ENCODE measurements at regions of chr6 and their contacts with region 1.

Region 1: DNA sequence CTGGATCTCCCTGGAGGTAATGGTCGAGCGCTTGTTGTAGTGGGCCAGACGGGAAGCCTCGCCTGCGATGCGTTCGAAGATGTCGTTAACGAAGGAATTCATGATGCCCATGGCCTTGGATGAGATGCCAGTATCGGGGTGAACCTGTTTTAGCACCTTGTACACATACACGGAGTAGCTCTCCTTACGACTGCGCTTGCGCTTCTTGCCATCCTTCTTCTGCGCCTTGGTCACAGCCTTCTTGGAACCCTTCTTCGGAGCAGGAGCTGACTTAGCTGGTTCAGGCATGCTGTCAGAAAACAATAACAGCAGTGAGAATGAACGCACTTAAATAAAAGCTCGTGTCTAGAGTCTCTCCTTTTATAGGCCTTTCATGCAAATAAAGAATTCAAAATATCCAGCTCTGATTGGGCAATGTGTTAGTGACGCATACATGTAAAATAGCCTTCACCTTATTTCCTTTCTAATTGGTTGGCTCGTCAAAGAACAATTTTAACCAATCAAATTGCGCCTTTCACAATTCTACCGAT is 129.2 kb downstream of the HFE start:
- DNase-seq: peak in 5 of 10 donors; percentile 66 to 77 (median 69)
- H3K4me3 ChIP-seq: peak overlapping the region; percentile 36 to 81 (median 66)
- H3K27ac ChIP-seq: peak overlapping the region in 57 of 59 donors; percentile 64 to 98 (median 91)
- H3K27me3 ChIP-seq: peaks cover 0 to 67% (median 16%) of the 10 kb centered on the region in 45 donors
- CTCF ChIP-seq: no peak

Region 2: DNA sequence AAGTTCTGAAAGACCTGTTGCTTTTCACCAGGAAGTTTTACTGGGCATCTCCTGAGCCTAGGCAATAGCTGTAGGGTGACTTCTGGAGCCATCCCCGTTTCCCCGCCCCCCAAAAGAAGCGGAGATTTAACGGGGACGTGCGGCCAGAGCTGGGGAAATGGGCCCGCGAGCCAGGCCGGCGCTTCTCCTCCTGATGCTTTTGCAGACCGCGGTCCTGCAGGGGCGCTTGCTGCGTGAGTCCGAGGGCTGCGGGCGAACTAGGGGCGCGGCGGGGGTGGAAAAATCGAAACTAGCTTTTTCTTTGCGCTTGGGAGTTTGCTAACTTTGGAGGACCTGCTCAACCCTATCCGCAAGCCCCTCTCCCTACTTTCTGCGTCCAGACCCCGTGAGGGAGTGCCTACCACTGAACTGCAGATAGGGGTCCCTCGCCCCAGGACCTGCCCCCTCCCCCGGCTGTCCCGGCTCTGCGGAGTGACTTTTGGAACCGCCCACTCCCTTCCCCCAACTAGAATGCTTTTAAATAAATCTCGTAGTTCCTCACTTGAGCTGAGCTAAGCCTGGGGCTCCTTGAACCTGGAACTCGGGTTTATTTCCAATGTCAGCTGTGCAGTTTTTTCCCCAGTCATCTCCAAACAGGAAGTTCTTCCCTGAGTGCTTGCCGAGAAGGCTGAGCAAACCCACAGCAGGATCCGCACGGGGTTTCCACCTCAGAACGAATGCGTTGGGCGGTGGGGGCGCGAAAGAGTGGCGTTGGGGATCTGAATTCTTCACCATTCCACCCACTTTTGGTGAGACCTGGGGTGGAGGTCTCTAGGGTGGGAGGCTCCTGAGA is 128.9 kb before region 1 on chr6 and contains the start of gene HFE:
- intact Hi-C with region 1: no loop called
- DNase-seq: peak in 2 of 10 donors; percentile 11 to 50
- H3K4me3 ChIP-seq: peak within 1 kb of the TSS; percentile 33 to 82 (median 64)
- H3K27ac ChIP-seq: peak within 1 kb of the TSS in 47 of 59 donors; percentile 3 to 91 (median 58)
- H3K27me3 ChIP-seq: no peaks in the 10 kb centered on the region
- CTCF ChIP-seq: peak in 11 of 56 donors; percentile 8 to 25 (median 14)
- total RNA-seq, gene HFE: 0.71 to 8.5 (median 2.6) TPM

Region 3: GRCh38 chr6:26270903-26271667 is 54.7 kb after region 1 on chr6:
- intact Hi-C with region 1: loop called in 1 of 2 experiments (anchors 5 kb)
- DNase-seq: peak in 3 of 10 donors; percentile 40 to 41 (median 40)
- H3K4me3 ChIP-seq: peak overlapping the region; percentile 12 to 68 (median 49)
- H3K27ac ChIP-seq: peak overlapping the region in 26 of 59 donors; percentile 6 to 82 (median 48)
- H3K27me3 ChIP-seq: peaks cover 3 to 75% (median 57%) of the 10 kb centered on the region in 45 donors
- CTCF ChIP-seq: no peak

Measured in dorsolateral prefrontal cortex (tissue), 120 donors.